Astrocyte of the cerebellum (primary cell): ENCODE measurements at regions of chr3 and their contacts with region 1.

Region 1: DNA sequence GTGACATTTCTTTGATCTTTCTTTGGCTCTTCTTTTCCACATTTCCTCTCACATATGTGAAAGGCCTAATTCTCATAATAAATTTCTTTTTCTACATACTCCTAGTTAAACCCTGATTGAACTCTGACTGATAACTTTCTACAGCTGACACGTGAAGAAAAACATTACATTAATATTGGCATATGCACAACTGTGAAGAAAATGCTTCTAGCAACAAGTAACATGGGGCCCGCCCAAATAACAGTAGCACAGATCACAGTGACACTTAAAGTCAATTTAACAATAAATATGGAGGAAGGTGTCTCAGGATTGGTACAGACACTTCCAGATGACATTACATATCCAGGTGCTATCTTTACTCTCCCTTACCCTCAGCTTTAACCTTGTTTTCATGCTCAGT is 317.6 kb upstream of the ZNF385D start:
- DNase-seq: no peak
- H3K4me3 ChIP-seq: no peak overlapping the region
- CTCF ChIP-seq: no peak

Region 2: GRCh38 chr3:22016197-22016596 is 52.4 kb before region 1 on chr3:
- in situ Hi-C with region 1: loop called (anchors 5 kb)
- DNase-seq: no peak
- H3K4me3 ChIP-seq: no peak overlapping the region
- CTCF ChIP-seq: no peak